ENCODE measurements at regions of chr7 and their contacts with region 1.

Region 1: DNA sequence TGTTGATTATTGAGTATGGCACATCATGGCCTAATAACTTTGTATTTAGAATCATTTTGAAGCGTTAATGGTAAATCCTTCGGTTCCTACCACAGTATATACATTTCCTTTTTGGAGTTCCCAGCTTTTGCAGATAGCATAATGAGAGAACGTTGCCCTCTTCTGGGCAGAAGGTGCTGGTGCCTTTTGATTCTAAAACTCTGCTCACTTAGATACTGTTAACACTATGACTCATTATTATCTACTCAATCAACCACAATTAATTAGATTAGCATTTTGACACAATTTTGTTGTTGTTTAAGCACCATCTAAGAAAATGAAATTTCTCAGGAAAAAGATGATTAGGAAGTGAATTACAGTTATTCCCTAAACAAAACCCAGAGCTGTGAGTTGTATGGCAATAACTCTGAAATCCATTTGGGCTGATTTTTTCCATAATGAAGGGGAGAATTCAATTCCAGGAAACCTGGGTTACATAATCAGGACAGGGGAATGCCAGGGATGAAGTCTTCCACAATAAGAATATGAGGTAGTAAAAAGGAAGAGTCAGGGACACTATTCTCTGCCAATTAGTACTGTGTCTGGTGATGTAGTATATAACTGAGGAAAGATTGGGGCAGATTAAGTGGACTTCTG is 11.5 kb upstream of the DLD start:
- DNase-seq: peak in 5 of 9 donors; percentile 30 to 50 (median 42)
- ATAC-seq: peak; percentile 85
- H3K4me3 ChIP-seq: no peak overlapping the region
- H3K4me3 Mint-ChIP-seq: no peak overlapping the region
- H3K27ac ChIP-seq: no peak overlapping the region
- H3K27ac Mint-ChIP-seq: peak overlapping the region in 1 of 9 donors; percentile 53
- H3K4me1 ChIP-seq: peaks cover 3 to 11% of the 10 kb centered on the region in 2 donors
- H3K4me1 Mint-ChIP-seq: peaks cover 5 to 34% (median 24%) of the 10 kb centered on the region in 7 donors
- H3K27me3 ChIP-seq: peaks cover 0 to 4% of the 10 kb centered on the region in 2 donors
- H3K27me3 Mint-ChIP-seq: peaks cover 0 to 23% (median 9%) of the 10 kb centered on the region in 5 donors

Region 2: DNA sequence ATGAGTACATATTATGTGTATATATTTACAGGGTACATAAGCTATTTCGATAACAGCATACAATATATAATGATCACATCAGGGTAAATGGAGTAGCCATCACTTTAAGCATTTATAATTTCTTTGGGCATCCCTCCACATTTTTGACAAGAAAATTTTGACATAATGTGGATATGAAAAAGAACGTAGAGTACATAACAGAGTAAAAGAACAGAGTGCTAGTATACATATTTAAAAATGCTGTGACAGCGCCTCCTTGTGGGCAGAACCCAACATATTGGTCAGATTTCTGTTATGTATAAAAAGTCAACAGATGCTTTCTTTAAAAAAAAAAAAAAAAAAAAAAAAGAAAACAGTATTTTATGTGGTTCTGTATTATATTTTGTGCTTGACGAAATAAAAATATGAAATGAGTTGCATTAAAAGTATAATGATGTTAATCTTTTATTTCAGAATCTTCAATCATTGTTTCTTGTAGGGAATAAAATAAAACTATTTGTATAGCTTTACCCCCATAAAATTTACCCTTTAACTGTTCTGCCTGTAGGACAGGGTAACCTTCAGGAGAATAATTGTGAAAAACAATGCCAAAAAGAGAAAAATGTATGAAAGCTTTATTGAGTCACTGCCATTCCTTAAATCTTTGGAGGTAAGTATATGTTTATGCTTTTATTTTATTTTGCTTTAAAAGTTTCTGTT is 729.0 kb before region 1 on chr7:
- CTCF ChIA-PET with region 1: no interaction called
- POLR2A ChIA-PET with region 1: no interaction called
- intact Hi-C with region 1: loop called (anchors 1 kb)
- DNase-seq: peak; percentile 45 to 79 (median 72)
- ATAC-seq: peak; percentile 88
- H3K4me3 ChIP-seq: no peak overlapping the region
- H3K4me3 Mint-ChIP-seq: no peak overlapping the region
- H3K27ac ChIP-seq: no peak overlapping the region
- H3K27ac Mint-ChIP-seq: no peak overlapping the region
- H3K4me1 ChIP-seq: no peaks in the 10 kb centered on the region
- H3K4me1 Mint-ChIP-seq: peaks cover 0 to 12% (median 4%) of the 10 kb centered on the region in 7 donors
- H3K27me3 ChIP-seq: no peaks in the 10 kb centered on the region
- H3K27me3 Mint-ChIP-seq: peaks cover 0 to 7% (median 3%) of the 10 kb centered on the region in 5 donors

Region 3: DNA sequence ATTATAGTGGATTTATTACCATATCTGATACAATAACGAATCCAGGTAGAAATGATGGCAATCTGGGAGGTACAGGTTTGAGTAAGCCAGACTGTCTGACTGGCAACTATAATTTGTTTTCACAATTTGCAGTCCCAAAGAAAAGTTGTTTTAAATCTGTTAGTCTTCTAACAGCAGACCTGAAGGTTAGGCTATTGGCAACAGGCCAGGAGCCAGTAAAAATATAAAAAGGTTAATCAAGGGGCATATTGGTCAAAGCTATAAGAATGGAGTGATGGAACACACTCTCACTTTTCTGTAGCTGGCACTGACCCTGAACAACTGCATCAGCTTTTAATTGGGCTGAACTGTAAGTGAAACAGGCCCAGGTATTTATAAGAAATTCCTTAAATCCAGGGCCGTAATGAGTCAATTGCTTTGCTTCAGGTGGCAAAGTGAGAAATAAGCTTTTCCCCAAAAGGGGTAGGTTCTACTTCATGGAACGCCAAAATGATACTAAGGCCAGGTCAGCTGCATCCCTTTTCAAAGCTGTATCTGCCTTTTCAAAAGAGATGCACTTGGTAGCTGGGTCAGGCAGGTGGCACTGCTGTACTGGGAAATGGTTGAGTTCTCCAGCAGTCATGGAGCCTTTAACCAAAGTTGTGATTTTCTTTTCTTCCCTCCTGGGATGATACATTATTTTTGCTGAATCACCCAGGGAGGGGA is 416.6 kb before region 1 on chr7:
- CTCF ChIA-PET with region 1: interaction called, 34 read pairs
- POLR2A ChIA-PET with region 1: no interaction called
- intact Hi-C with region 1: loop called (anchors 1 kb)
- DNase-seq: peak; percentile 10 to 47 (median 36)
- ATAC-seq: peak; percentile 82
- H3K4me3 ChIP-seq: no peak overlapping the region
- H3K4me3 Mint-ChIP-seq: no peak overlapping the region
- H3K27ac ChIP-seq: no peak overlapping the region
- H3K27ac Mint-ChIP-seq: peak overlapping the region in 1 of 9 donors; percentile 19
- H3K4me1 ChIP-seq: no peaks in the 10 kb centered on the region
- H3K4me1 Mint-ChIP-seq: peaks cover 0 to 6% (median 0%) of the 10 kb centered on the region in 7 donors
- H3K27me3 ChIP-seq: no peaks in the 10 kb centered on the region
- H3K27me3 Mint-ChIP-seq: no peaks in the 10 kb centered on the region

Region 4: GRCh38 chr7:107725151-107725740 is 154.3 kb before region 1 on chr7:
- CTCF ChIA-PET with region 1: interaction called, 6 read pairs
- POLR2A ChIA-PET with region 1: interaction called, 3 read pairs
- intact Hi-C with region 1: loop called (anchors 1 kb)
- DNase-seq: peak in 7 of 9 donors; percentile 23 to 56 (median 46)
- ATAC-seq: no peak
- H3K4me3 ChIP-seq: no peak overlapping the region
- H3K4me3 Mint-ChIP-seq: no peak overlapping the region
- H3K27ac ChIP-seq: no peak overlapping the region
- H3K27ac Mint-ChIP-seq: no peak overlapping the region
- H3K4me1 ChIP-seq: no peaks in the 10 kb centered on the region
- H3K4me1 Mint-ChIP-seq: no peaks in the 10 kb centered on the region
- H3K27me3 ChIP-seq: peaks cover 0 to 3% of the 10 kb centered on the region in 2 donors
- H3K27me3 Mint-ChIP-seq: peaks cover 9 to 29% (median 17%) of the 10 kb centered on the region in 5 donors

Region 5: GRCh38 chr7:108146070-108146837 is 266.7 kb after region 1 on chr7:
- CTCF ChIA-PET with region 1: no interaction called
- POLR2A ChIA-PET with region 1: interaction called, 3 read pairs
- intact Hi-C with region 1: loop called (anchors 1 to 2 kb)
- DNase-seq: peak in 7 of 9 donors; percentile 12 to 52 (median 44)
- ATAC-seq: peak; percentile 67
- H3K4me3 ChIP-seq: no peak overlapping the region
- H3K4me3 Mint-ChIP-seq: no peak overlapping the region
- H3K27ac ChIP-seq: no peak overlapping the region
- H3K27ac Mint-ChIP-seq: no peak overlapping the region
- H3K4me1 ChIP-seq: no peaks in the 10 kb centered on the region
- H3K4me1 Mint-ChIP-seq: no peaks in the 10 kb centered on the region
- H3K27me3 ChIP-seq: no peaks in the 10 kb centered on the region
- H3K27me3 Mint-ChIP-seq: peaks cover 0 to 24% (median 9%) of the 10 kb centered on the region in 5 donors

Measured in naive thymus-derived CD4-positive, alpha-beta T cell (primary cell).